Tibial artery (tissue), 4 donors: ENCODE measurements at regions of chr5 and their contacts with region 1.

Region 1: GRCh38 chr5:73448463-73449136 is at the start of gene FOXD1:
- DNase-seq: peak; percentile 75 to 90
- H3K4me3 ChIP-seq: peak within 1 kb of the TSS; percentile 50 to 53
- H3K27ac ChIP-seq: peak within 1 kb of the TSS in 1 of 2 donors; percentile 62
- H3K4me1 ChIP-seq: peaks cover 0 to 37% (median 25%) of the 10 kb centered on the region in 4 donors
- H3K27me3 ChIP-seq: peaks cover 15 to 91% of the 10 kb centered on the region in 2 donors
- CTCF ChIP-seq: no peak

Region 2: DNA sequence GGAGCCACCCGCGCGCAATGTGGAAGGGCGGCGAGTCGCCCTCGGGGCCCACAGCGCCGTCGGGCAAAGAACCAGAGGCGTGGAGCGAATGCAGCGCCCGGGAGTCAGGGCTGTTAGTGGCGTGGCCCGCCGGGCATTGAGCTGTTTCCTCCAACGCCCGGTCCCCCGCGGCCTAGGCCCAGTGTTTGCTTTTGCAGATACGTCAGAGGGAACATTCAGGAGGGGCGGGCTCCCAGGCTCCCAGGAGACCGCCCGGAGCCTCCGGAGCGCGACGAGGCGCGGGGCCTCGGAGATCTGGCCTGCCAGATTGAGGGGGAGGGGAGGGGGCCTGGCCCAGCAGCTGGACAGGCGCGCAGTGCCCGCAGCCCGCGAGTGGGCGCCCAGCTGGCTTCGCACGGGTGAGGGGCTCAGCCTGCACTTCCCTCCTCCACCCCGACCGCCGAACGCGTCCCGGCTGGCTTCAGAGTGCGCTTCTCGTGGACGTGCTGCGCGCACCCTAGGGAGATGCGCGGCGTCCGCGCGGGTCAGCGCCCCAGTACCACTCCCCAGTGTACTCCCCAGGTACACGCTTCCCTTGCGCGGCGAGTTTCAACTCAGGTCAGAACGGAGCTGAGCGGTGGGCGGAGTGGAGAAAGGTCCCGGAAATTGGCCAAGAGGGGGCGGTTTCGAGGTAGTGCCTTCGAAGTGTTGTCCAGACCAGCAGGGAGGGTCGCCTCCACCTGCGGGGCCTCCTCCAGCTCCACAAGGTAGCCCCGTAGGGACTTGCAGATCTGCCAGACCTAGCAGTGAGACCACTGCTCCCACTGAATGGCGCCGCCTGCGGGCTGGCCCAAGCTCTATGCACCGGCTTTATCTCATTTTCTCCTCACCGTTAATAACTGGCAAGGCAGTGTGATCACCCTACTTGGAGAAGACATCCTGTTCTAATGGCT is 145.2 kb before region 1 on chr5:
- intact Hi-C with region 1: loop called (anchors 10 kb)
- DNase-seq: no peak
- H3K4me3 ChIP-seq: peak overlapping the region in 1 of 2 donors; percentile 25
- H3K27ac ChIP-seq: no peak overlapping the region
- H3K4me1 ChIP-seq: peaks cover 0 to 26% (median 20%) of the 10 kb centered on the region in 4 donors
- H3K27me3 ChIP-seq: peaks cover 0 to 84% of the 10 kb centered on the region in 2 donors
- CTCF ChIP-seq: no peak

Region 3: DNA sequence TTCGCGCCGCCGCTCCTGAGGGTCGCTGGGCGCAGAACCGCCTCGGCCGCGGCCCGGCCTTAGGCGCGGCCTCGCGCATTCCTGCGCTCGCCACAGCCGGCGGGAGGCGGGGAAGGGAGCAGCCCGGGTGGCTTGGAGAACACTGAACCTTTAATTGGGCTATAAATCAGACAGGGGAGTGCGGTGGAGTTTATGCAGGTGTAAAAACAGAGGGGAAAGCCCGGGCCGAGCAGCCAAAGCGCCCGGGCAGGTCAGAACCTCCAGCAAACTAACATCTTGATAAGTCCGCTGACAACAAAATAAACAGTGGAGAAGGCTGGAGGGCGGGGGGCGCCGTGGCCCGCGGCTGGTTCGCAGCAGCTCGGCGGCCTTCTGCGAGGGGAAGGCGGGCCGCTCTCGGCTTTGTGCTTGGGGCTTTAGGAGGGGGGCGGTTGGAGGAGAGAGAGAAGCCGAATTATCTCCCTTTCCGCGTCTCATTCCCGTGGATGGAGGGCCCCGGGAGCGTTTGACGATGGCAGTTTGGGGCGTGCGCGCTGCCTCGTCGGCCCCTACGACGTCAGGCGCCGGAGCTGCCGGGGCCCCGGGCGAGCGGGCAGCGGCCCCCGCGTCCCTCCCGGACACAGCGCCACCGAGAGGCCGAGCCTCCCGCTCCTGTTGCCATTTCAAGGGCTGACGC is 11.4 kb before region 1 on chr5:
- intact Hi-C with region 1: loop called (anchors 2 kb)
- DNase-seq: no peak
- H3K4me3 ChIP-seq: peak overlapping the region; percentile 23
- H3K27ac ChIP-seq: peak overlapping the region in 1 of 2 donors; percentile 12
- H3K4me1 ChIP-seq: peaks cover 0 to 15% (median 13%) of the 10 kb centered on the region in 4 donors
- H3K27me3 ChIP-seq: peaks cover 8 to 97% of the 10 kb centered on the region in 2 donors
- CTCF ChIP-seq: no peak

Region 4: GRCh38 chr5:73494721-73495120 is 46.1 kb after region 1 on chr5:
- intact Hi-C with region 1: no loop called
- DNase-seq: no peak
- H3K4me3 ChIP-seq: no peak overlapping the region
- H3K27ac ChIP-seq: no peak overlapping the region
- H3K4me1 ChIP-seq: peaks cover 0 to 15% (median 7%) of the 10 kb centered on the region in 4 donors
- H3K27me3 ChIP-seq: no peaks in the 10 kb centered on the region
- CTCF ChIP-seq: no peak

Region 5: DNA sequence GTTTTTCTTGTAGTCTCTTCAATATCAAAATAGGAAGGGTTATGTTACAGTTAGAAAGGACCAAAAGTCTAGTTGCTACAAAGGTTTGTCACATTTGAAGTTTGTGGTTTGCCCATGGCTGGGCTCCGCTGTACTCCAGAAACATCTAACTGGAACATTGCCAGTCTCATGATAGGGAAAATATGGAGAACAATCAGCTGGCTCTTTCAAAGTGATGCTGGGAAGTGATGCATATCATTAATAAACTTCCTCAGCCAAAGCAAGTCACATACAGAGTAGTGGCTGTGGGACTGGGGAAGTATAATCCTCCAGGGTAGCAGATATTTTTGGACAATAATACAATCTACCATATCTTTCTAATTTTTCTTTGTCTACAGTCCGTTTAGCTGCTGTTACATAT is 58.5 kb after region 1 on chr5:
- intact Hi-C with region 1: loop called (anchors 10 kb)
- DNase-seq: no peak
- H3K4me3 ChIP-seq: no peak overlapping the region
- H3K27ac ChIP-seq: no peak overlapping the region
- H3K4me1 ChIP-seq: no peaks in the 10 kb centered on the region
- H3K27me3 ChIP-seq: no peaks in the 10 kb centered on the region
- CTCF ChIP-seq: no peak